Activated CD8-positive, alpha-beta T cell treated with anti-CD3 and anti-CD28 coated beads for 36 hours (primary cell): ENCODE measurements at regions of chr17 and their contacts with region 1.

Region 1: DNA sequence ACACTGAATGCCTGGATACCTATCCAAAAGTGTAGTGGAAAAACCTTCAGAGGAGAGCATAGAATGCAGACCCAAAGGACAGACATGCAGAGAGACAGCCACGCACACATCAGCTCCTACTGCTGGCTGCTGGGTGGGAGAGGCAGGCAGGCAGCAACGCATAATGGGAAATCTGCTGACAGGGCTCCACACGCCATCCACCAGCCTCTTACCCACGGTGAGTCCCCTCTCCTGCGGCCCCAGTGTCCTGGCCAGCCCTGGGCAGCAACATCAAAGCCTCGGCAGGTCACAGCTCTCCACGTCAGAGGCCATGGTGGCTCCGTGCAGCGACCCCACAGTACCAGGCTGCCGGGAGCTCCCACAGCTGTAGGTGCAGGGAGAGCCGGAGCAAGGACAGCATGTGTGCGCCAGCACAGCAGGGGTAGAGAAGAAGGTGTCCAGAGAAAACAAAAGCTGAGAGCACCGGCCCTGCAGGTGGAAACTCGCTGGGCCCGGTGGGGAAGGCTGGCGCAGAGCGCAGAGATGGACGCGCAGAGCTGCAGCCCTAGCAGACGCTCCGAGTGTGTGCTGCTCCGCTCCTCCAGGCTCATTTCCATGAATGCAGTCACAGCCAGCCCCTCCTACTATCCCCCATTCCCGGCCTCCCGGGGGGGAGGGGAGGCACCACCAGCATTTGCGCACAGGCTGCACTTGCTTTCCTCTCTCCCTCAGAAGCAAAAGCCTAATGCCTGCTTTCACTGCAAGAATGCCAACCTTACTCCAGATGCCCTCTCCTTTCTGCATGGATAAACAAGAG is 58.9 kb downstream of the CYTH1 start:
- DNase-seq: no peak
- ATAC-seq: no peak
- H3K4me3 Mint-ChIP-seq: no peak overlapping the region
- H3K27ac Mint-ChIP-seq: peak overlapping the region; percentile 82
- H3K4me1 Mint-ChIP-seq: peaks cover 95% of the 10 kb centered on the region
- H3K27me3 Mint-ChIP-seq: no peaks in the 10 kb centered on the region
- CTCF ChIP-seq: no peak

Region 2: GRCh38 chr17:78617511-78618061 is 105.6 kb before region 1 on chr17:
- CTCF ChIA-PET with region 1: no interaction called
- POLR2A ChIA-PET with region 1: no interaction called
- intact Hi-C with region 1: no loop called
- DNase-seq: no peak
- ATAC-seq: no peak
- H3K4me3 Mint-ChIP-seq: no peak overlapping the region
- H3K27ac Mint-ChIP-seq: no peak overlapping the region
- H3K4me1 Mint-ChIP-seq: no peaks in the 10 kb centered on the region
- H3K27me3 Mint-ChIP-seq: no peaks in the 10 kb centered on the region
- CTCF ChIP-seq: no peak

Region 3: DNA sequence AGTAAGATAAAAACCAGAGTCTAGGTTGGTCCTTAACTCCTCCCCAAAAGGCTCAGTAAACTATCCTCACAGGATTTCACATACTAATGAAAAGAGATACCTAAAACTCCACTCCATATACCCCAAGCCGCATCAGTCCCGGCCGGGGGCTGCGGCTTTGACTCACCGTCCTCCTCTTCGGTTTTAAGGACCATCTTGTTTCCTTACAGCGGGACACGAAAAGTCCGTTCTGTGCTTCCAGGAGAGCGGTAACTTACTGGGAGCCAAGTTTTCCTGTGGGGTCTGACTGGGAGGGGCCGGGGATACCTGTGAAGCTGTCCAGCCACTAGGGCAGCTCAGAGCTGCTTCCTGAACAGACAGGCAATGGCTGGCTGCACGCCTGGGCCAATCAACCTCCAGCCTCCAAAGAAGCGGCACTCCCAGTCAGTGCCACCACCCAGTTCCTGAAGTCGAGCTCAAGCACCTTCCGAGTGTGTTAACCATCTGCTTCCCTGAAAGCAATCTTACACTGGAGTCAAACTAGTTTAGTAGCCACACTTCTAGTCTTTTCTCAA is 13.4 kb after region 1 on chr17:
- CTCF ChIA-PET with region 1: interaction called, 24 read pairs
- POLR2A ChIA-PET with region 1: interaction called, 27 read pairs
- intact Hi-C with region 1: no loop called
- DNase-seq: peak; percentile 74
- ATAC-seq: peak; percentile 71
- H3K4me3 Mint-ChIP-seq: peak overlapping the region; percentile 95
- H3K27ac Mint-ChIP-seq: peak overlapping the region; percentile 99
- H3K4me1 Mint-ChIP-seq: peaks cover 92% of the 10 kb centered on the region
- H3K27me3 Mint-ChIP-seq: no peaks in the 10 kb centered on the region
- CTCF ChIP-seq: no peak

Region 4: GRCh38 chr17:78774956-78775571 is 51.9 kb after region 1 on chr17:
- CTCF ChIA-PET with region 1: no interaction called
- POLR2A ChIA-PET with region 1: interaction called, 7 read pairs
- intact Hi-C with region 1: loop called (anchors 5 kb)
- DNase-seq: peak; percentile 89
- ATAC-seq: peak; percentile 66
- H3K4me3 Mint-ChIP-seq: peak overlapping the region; percentile 87
- H3K27ac Mint-ChIP-seq: peak overlapping the region; percentile 97
- H3K4me1 Mint-ChIP-seq: peaks cover 53% of the 10 kb centered on the region
- H3K27me3 Mint-ChIP-seq: no peaks in the 10 kb centered on the region
- CTCF ChIP-seq: no peak